IMR-90 (cell line): ENCODE measurements at regions of chr21 and their contacts with region 1.

Region 1: GRCh38 chr21:35051287-35051818 is 2.3 kb upstream of the RUNX1 start:
- DNase-seq: peak; percentile 80
- ATAC-seq: peak; percentile 63
- H3K4me3 ChIP-seq: no peak overlapping the region
- H3K27ac ChIP-seq: peak overlapping the region; percentile 42
- H3K4me1 ChIP-seq: peaks cover 29% of the 10 kb centered on the region
- H3K27me3 ChIP-seq: no peaks in the 10 kb centered on the region
- CTCF ChIP-seq: peak; percentile 61
- POLR2A ChIP-seq: no peak
- RAD21 ChIP-seq: peak; percentile 67

Region 2: GRCh38 chr21:34734696-34735095 is 316.7 kb before region 1 on chr21:
- CTCF ChIA-PET with region 1: no interaction called
- POLR2A ChIA-PET with region 1: no interaction called
- dilution Hi-C with region 1: no loop called
- in situ Hi-C with region 1: no loop called
- intact Hi-C with region 1: no loop called
- DNase-seq: no peak
- ATAC-seq: no peak
- H3K4me3 ChIP-seq: no peak overlapping the region
- H3K27ac ChIP-seq: no peak overlapping the region
- H3K4me1 ChIP-seq: peaks cover 2% of the 10 kb centered on the region; the same call in 1 of the 2 replicates
- H3K27me3 ChIP-seq: peaks cover 15% of the 10 kb centered on the region
- CTCF ChIP-seq: no peak
- POLR2A ChIP-seq: no peak
- RAD21 ChIP-seq: no peak

Region 3: DNA sequence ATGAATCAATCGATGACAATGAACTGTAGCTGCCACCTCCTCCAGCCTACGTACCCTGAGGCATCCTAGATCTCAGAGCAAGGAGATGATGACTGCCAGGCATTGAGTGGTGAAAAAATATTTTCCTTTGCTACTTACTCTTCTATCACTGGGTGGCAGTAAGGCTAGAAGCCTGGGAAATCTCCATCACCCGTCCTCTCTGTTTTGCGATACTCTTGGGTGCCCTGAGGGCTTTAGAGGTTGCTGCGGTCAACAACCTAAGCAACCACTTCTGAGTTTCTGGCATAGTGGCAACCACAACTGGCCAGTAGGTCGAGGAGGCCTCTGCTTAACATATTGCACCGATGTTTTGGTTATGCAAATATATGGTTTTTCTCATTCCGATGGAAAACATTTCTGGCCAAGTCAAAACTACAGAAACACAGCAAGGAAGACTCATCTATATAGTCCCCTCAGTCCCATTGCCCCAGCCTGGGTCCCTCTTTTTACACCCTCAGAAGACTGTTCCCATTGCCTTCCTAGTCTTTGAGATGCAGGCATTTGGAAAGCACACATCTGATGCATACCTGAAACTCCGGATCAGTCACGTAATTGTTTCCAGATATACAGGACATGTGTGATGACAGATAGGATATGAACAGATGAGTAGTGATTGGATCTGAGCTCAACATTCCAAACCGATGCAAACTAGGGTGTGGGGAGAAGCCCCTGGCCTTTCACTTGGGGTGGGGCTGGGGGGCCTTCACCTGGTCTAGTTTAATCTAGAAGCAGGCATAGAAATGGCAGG is 139.0 kb before region 1 on chr21:
- CTCF ChIA-PET with region 1: interaction called, 3 read pairs
- POLR2A ChIA-PET with region 1: no interaction called
- dilution Hi-C with region 1: no loop called
- in situ Hi-C with region 1: loop called (anchors 10 kb)
- intact Hi-C with region 1: no loop called
- DNase-seq: no peak
- ATAC-seq: no peak
- H3K4me3 ChIP-seq: no peak overlapping the region
- H3K27ac ChIP-seq: no peak overlapping the region
- H3K4me1 ChIP-seq: peaks cover 25% of the 10 kb centered on the region
- H3K27me3 ChIP-seq: no peaks in the 10 kb centered on the region
- CTCF ChIP-seq: no peak
- POLR2A ChIP-seq: no peak
- RAD21 ChIP-seq: no peak

Region 4: GRCh38 chr21:35189077-35189863 is 137.9 kb after region 1 on chr21:
- CTCF ChIA-PET with region 1: no interaction called
- POLR2A ChIA-PET with region 1: no interaction called
- dilution Hi-C with region 1: no loop called
- in situ Hi-C with region 1: no loop called
- intact Hi-C with region 1: no loop called
- DNase-seq: peak; percentile 82
- ATAC-seq: peak; percentile 79
- H3K4me3 ChIP-seq: no peak overlapping the region
- H3K27ac ChIP-seq: no peak overlapping the region; the same call in 1 of the 2 replicates
- H3K4me1 ChIP-seq: no peaks in the 10 kb centered on the region; the same call in 1 of the 2 replicates
- H3K27me3 ChIP-seq: no peaks in the 10 kb centered on the region
- CTCF ChIP-seq: no peak
- POLR2A ChIP-seq: no peak
- RAD21 ChIP-seq: no peak

Region 5: GRCh38 chr21:35256467-35256988 is 205.2 kb after region 1 on chr21:
- CTCF ChIA-PET with region 1: no interaction called
- POLR2A ChIA-PET with region 1: no interaction called
- dilution Hi-C with region 1: no loop called
- in situ Hi-C with region 1: no loop called
- intact Hi-C with region 1: loop called (anchors 2 kb)
- DNase-seq: peak; percentile 100
- ATAC-seq: peak; percentile 94
- H3K4me3 ChIP-seq: no peak overlapping the region
- H3K27ac ChIP-seq: peak overlapping the region; percentile 49; the same call in 1 of the 2 replicates
- H3K4me1 ChIP-seq: peaks cover 8% of the 10 kb centered on the region
- H3K27me3 ChIP-seq: no peaks in the 10 kb centered on the region
- CTCF ChIP-seq: no peak; the same call in 1 of the 2 replicates
- POLR2A ChIP-seq: no peak
- RAD21 ChIP-seq: peak; percentile 40

Region 6: GRCh38 chr21:35508139-35508888 is 457.0 kb after region 1 on chr21:
- CTCF ChIA-PET with region 1: no interaction called
- POLR2A ChIA-PET with region 1: no interaction called
- dilution Hi-C with region 1: no loop called
- in situ Hi-C with region 1: no loop called
- intact Hi-C with region 1: loop called (anchors 10 kb)
- DNase-seq: peak; percentile 65
- ATAC-seq: peak; percentile 75
- H3K4me3 ChIP-seq: no peak overlapping the region
- H3K27ac ChIP-seq: no peak overlapping the region
- H3K4me1 ChIP-seq: peaks cover 10% of the 10 kb centered on the region
- H3K27me3 ChIP-seq: no peaks in the 10 kb centered on the region
- CTCF ChIP-seq: peak; percentile 36
- POLR2A ChIP-seq: no peak
- RAD21 ChIP-seq: peak; percentile 44; the same call in 1 of the 2 replicates

Region 7: GRCh38 chr21:35840197-35840799 is 788.9 kb after region 1 on chr21:
- CTCF ChIA-PET with region 1: no interaction called
- POLR2A ChIA-PET with region 1: no interaction called
- dilution Hi-C with region 1: no loop called
- in situ Hi-C with region 1: no loop called
- intact Hi-C with region 1: loop called (anchors 2 kb)
- DNase-seq: peak; percentile 91
- ATAC-seq: peak; percentile 85
- H3K4me3 ChIP-seq: no peak overlapping the region
- H3K27ac ChIP-seq: no peak overlapping the region
- H3K4me1 ChIP-seq: no peaks in the 10 kb centered on the region
- H3K27me3 ChIP-seq: no peaks in the 10 kb centered on the region
- CTCF ChIP-seq: peak; percentile 94
- POLR2A ChIP-seq: 0 out of 2 replicates have a peak, but pooled peaks have one; percentile 29
- RAD21 ChIP-seq: peak; percentile 90